IMR-90 (cell line): ENCODE measurements at regions of chr17 and their contacts with region 1.

Region 1: GRCh38 chr17:6069539-6070429 is at the start of gene WSCD1:
- DNase-seq: no peak
- ATAC-seq: peak; percentile 72; the same call in 1 of the 2 replicates
- H3K4me3 ChIP-seq: no peak within 1 kb of the TSS; the same call in 1 of the 2 replicates
- H3K27ac ChIP-seq: no peak within 1 kb of the TSS
- H3K4me1 ChIP-seq: no peaks in the 10 kb centered on the region
- H3K27me3 ChIP-seq: peaks cover 22% of the 10 kb centered on the region
- CTCF ChIP-seq: no peak
- POLR2A ChIP-seq: no peak
- RAD21 ChIP-seq: no peak
- total RNA-seq, gene WSCD1: under 0.01 TPM in 1 of 2 replicates, not detected in the other

Region 2: GRCh38 chr17:5644065-5644464 is 425.7 kb before region 1 on chr17:
- CTCF ChIA-PET with region 1: no interaction called
- POLR2A ChIA-PET with region 1: no interaction called
- dilution Hi-C with region 1: no loop called
- in situ Hi-C with region 1: no loop called
- intact Hi-C with region 1: no loop called
- DNase-seq: no peak
- ATAC-seq: no peak
- H3K4me3 ChIP-seq: no peak overlapping the region
- H3K27ac ChIP-seq: no peak overlapping the region
- H3K4me1 ChIP-seq: no peaks in the 10 kb centered on the region
- H3K27me3 ChIP-seq: no peaks in the 10 kb centered on the region; the same call in 1 of the 2 replicates
- CTCF ChIP-seq: no peak
- POLR2A ChIP-seq: no peak
- RAD21 ChIP-seq: no peak

Region 3: GRCh38 chr17:6137716-6138502 is 68.1 kb after region 1 on chr17:
- CTCF ChIA-PET with region 1: no interaction called
- POLR2A ChIA-PET with region 1: no interaction called
- dilution Hi-C with region 1: no loop called
- in situ Hi-C with region 1: no loop called
- intact Hi-C with region 1: loop called (anchors 10 kb)
- DNase-seq: no peak
- ATAC-seq: no peak
- H3K4me3 ChIP-seq: no peak overlapping the region
- H3K27ac ChIP-seq: no peak overlapping the region
- H3K4me1 ChIP-seq: no peaks in the 10 kb centered on the region
- H3K27me3 ChIP-seq: no peaks in the 10 kb centered on the region
- CTCF ChIP-seq: no peak
- POLR2A ChIP-seq: no peak
- RAD21 ChIP-seq: no peak

Region 4: DNA sequence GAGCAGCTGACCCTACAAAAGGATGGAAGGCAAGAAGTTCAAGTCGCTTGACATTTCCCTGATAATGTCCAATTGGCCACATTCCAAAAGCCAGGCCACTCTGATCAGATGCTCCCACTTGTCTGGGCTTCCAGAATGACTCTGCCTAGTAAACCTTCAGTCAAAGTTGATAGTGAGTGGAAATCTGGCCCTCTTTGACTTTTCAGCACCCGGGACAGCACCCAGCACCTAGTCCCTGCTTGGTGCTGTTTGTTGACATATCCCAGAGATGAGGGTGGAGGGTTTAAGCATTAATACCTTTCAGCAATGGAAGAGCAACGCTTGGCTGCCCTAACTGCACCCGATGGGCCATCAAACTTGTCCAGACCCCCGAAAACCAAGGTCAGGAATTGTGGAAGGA is 233.9 kb after region 1 on chr17:
- CTCF ChIA-PET with region 1: no interaction called
- POLR2A ChIA-PET with region 1: no interaction called
- dilution Hi-C with region 1: no loop called
- in situ Hi-C with region 1: no loop called
- intact Hi-C with region 1: no loop called
- DNase-seq: no peak
- ATAC-seq: no peak; the same call in 1 of the 2 replicates
- H3K4me3 ChIP-seq: no peak overlapping the region
- H3K27ac ChIP-seq: no peak overlapping the region
- H3K4me1 ChIP-seq: no peaks in the 10 kb centered on the region
- H3K27me3 ChIP-seq: no peaks in the 10 kb centered on the region
- CTCF ChIP-seq: no peak
- POLR2A ChIP-seq: no peak
- RAD21 ChIP-seq: no peak